GM12878 (cell line): ENCODE measurements at regions of chr7 and their contacts with region 1.

Region 1: DNA sequence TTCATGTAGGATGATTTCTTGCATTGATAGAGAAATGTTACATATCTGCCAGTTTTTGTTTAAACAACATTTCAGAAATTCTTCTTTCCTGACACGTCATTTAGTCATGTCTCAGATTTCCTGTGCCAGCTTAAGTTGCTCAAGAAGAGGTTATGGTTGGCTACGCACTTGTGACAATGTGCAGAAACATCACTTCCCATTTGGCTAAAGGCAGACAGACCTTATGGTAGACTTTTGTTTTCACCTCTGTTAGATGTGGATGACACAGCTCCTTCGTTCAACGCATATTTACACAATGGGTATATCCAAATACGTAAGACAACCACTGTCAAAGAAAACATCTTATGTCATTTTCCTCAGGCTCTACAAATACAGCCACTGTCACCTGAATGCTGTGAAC is 125.8 kb downstream of the DOCK4 start:
- DNase-seq: peak; percentile 89
- ATAC-seq: peak; percentile 96
- H3K4me3 ChIP-seq: peak overlapping the region; percentile 44; the same call in 1 of the 2 replicates
- H3K27ac ChIP-seq: peak overlapping the region; percentile 61
- H3K4me1 ChIP-seq: peaks cover 28% of the 10 kb centered on the region
- H3K27me3 ChIP-seq: no peaks in the 10 kb centered on the region
- CTCF ChIP-seq: no peak
- EP300 ChIP-seq: peak in 1 of 2 experiments; percentile 43; a peak in 1 of 4 replicates
- POLR2A ChIP-seq: no peak
- RAD21 ChIP-seq: no peak

Region 2: GRCh38 chr7:112206238-112207044 is 126.0 kb after region 1 on chr7 and contains the starts of genes DOCK4 and ZNF277:
- CTCF ChIA-PET with region 1: no interaction called
- POLR2A ChIA-PET with region 1: no interaction called
- RAD21 ChIA-PET with region 1: no interaction called
- SMC1A ChIA-PET with region 1: no interaction called
- in situ Hi-C with region 1: no loop called
- intact Hi-C with region 1: loop called (anchors 5 kb)
- DNase-seq: peak; percentile 94
- ATAC-seq: peak; percentile 94
- H3K4me3 ChIP-seq: peak within 1 kb of the TSS; percentile 94
- H3K27ac ChIP-seq: peak within 1 kb of the TSS; percentile 63
- H3K4me1 ChIP-seq: no peaks in the 10 kb centered on the region; the same call in 1 of the 2 replicates
- H3K27me3 ChIP-seq: no peaks in the 10 kb centered on the region
- CTCF ChIP-seq: no peak
- EP300 ChIP-seq: no peak
- POLR2A ChIP-seq: peak; percentile 69
- RAD21 ChIP-seq: no peak
- polyA plus RNA-seq, gene DOCK4: 0.03 to 0.05 TPM
- polyA plus RNA-seq, gene ZNF277: 23.5 to 28.7 TPM